ENCODE measurements at regions of chr16 and their contacts with region 1.

Region 1: DNA sequence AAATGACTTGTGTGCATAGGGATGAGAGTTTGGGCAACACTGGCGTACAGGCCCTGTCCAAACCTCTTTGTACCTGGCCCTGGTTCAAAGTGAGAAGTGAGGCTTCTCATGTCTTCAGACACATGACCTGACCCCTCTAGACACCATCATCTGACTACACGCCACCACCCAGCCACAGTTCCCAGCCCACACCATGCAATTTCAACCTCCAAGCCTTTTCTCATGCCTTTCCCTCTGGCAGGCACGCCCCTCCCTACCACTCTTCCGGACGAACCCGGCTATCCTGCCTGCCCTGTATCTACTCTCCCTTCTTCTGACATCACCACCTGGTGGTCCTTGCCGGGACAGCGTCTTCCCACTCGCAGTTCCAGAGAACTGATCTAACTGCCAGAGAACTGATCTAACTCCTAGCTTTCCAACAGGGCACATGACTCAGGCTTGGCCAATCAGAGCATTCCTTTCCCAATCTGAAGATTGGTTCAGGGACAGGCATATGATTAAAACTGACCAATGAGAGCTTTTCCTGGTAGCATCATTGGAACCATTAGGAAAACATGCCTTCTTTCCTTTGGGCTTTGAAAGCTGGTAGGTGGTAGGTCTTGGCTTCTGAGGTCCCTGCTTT is 27.1 kb upstream of the IL21R start:
- DNase-seq: peak; percentile 74
- CTCF ChIP-seq: peak; percentile 38

Region 2: DNA sequence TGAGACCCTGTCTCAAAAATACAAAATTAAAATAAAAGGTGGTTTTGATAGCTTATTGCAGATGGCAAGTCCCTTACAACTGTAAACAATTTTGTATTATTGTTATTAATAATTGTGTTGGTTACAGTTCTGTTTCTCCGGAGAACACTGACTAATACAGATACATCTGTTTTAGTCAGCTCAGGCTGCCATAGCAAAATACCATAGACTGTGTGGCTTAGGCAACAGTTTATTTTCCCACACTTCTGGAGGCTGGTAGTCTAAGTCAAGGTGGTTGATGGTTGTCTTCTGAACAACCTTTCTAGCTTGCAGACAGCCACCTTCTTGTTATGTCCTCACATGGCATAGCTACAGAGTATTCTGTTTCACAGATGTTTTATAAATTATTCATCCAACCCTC is 12.8 kb after region 1 on chr16:
- CTCF ChIA-PET with region 1: interaction called, 64 read pairs
- POLR2A ChIA-PET with region 1: interaction called, 6 read pairs
- DNase-seq: no peak
- CTCF ChIP-seq: no peak

Measured in GM10248 (cell line).